Right ventricle myocardium inferior (tissue), 1 donor: ENCODE measurements at regions of chr1 and their contacts with region 1.

Region 1: GRCh38 chr1:244272471-244273261 is 179.0 kb downstream of the ADSS2 start:
- DNase-seq: no peak
- ATAC-seq: peak; percentile 87

Region 2: DNA sequence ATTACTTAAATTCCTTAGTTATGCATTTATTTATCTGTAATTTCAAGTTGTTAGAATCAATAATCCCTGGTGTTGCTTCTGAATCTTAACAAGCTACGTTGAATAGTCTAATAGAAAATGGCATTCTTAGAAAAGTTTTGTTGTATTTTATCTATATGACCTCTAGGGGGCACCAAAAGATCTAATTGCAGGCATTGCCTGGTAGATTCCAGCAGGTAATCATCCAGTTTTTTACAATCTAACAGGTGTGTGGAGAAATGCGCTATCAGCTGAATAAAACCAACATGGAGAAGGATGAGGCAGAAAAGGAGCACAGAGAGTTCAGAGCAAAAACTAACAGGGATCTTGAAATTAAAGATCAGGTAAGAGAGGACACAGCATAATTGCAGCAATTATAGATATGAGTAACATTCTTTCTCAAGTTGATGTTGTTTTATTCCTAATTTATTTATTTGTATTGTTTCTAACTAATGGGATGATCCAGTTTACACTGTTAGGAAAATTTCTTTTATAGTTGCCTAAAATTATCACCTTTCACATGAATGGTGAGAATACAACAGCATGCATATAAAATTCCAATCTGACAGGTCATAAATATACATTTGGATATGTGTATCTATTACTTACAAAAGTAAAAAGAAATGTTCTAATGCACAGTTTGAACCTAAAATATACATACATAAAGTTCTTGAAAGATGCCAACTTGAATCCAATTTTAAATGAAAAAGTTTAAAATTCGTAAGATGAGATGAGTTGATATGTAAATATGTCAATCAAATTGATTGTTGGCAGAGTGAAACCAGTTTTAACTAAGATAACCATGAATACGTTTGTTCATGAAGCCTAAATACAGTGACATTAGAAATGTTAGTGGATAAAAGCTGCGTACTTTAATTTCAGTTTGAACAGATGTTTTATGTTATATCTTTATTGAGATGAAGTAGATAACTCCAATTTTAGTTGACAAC is 928.4 kb before region 1 on chr1:
- intact Hi-C with region 1: loop called (anchors 1 kb)
- DNase-seq: no peak
- ATAC-seq: no peak

Region 3: DNA sequence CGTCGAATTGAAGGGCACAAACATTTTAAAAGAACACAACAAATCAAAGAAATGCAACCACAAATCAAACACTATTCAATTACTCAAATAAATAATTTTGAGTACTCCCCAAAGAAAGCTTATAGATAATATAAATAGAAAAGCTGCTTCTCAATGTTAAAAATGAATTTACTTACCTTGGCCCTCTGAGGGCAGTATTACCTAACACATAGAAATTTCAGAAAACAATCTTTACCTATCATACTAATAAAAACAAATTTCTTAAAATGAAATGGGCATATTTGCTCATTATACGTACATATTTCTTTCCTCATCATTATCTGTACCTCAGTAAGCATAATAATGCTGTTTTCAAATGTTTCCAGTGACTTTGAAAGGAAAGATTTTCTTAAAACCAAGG is 564.5 kb before region 1 on chr1:
- intact Hi-C with region 1: loop called (anchors 5 kb)
- DNase-seq: no peak
- ATAC-seq: no peak

Region 4: GRCh38 chr1:244047621-244048471 is 224.8 kb before region 1 on chr1:
- intact Hi-C with region 1: loop called (anchors 5 kb)
- DNase-seq: peak; percentile 99
- ATAC-seq: peak; percentile 98

Region 5: DNA sequence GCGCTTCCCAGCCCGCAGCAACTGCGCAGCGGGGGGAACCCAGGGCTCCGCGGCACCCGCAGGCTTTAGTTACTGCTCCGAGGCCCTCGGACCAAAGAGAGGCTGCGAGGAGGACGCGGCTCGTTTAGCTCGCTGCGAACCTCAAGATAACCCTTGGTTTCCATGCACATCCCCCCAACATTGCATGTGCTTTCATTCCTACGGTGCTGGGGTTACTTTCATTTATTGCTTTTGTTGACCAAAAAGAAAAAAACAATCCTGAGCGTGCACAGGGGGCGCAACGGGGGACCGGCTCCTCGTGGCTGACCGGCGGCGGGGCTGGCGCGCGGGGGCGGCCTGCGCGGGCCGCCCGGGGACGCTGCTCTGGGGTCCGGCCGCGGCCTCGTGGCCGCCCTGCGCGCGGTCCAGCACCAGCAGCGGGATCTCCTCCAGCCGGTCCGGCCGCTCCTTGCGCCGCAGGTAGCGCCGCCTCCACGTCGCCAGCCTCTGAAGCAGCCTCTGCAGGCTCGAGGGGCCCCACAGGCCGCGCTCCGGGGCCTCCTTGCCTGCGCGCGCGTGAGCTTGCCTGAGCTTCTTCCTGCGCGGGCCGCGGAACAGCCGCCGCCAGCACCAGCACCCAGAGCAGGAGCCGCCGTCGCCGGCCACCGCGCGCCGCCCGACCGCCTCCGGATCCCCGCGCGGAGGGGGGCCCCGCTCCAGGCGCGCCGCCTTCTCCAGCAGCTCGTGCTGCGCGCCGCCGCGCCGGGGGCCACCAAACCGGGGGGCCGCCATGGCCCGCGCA is 457.7 kb after region 1 on chr1:
- intact Hi-C with region 1: no loop called
- DNase-seq: no peak
- ATAC-seq: peak; percentile 68